Activated CD4-positive, alpha-beta T cell treated with anti-CD3 and anti-CD28 coated beads for 36 hours (primary cell): ENCODE measurements at regions of chr14 and their contacts with region 1.

Region 1: DNA sequence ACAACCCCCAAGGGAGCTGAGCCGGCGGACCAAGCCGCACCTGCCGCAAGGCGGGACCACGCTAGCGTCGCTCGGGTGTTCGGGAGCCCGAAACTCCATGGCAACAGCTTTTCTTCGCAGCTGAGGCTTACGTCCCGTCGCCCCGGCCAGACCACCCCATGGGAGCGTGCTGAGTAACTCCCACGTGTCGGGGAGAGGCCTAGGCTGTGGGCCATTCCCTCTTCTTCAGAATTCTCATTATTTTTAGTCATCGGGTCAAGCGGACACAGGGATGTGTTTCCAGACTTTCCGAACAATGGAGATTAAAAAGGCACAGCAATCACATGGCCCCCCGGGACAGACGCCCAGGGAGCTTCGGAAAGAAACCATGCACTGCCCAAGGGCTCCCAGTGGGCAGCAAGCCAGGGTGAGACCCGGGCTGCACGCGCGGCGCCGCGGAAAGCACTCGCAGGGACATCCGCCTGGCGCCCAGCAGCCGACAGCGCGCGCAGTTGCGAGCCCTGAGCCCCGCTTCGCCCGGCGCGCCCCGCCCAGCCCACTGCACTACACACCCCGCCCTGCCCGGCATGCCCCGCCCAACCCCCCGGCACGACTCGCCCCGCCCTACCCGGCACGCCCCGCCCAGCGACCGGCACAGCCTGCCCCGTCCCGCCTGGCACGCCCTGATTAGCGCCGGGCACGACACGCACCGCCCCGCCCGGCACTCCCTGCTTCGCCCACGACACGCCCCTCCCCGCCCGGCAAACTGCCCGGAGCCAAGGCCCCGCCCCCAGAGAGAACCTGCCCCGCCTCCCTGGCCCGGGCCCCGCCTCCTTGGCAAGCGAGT is 422 bp upstream of the AK7 start:
- DNase-seq: peak; percentile 100
- ATAC-seq: peak; percentile 97
- H3K4me3 Mint-ChIP-seq: peak overlapping the region; percentile 85
- H3K27ac Mint-ChIP-seq: peak overlapping the region; percentile 84
- H3K4me1 Mint-ChIP-seq: peaks cover 8% of the 10 kb centered on the region
- H3K27me3 Mint-ChIP-seq: peaks cover 8% of the 10 kb centered on the region

Region 2: DNA sequence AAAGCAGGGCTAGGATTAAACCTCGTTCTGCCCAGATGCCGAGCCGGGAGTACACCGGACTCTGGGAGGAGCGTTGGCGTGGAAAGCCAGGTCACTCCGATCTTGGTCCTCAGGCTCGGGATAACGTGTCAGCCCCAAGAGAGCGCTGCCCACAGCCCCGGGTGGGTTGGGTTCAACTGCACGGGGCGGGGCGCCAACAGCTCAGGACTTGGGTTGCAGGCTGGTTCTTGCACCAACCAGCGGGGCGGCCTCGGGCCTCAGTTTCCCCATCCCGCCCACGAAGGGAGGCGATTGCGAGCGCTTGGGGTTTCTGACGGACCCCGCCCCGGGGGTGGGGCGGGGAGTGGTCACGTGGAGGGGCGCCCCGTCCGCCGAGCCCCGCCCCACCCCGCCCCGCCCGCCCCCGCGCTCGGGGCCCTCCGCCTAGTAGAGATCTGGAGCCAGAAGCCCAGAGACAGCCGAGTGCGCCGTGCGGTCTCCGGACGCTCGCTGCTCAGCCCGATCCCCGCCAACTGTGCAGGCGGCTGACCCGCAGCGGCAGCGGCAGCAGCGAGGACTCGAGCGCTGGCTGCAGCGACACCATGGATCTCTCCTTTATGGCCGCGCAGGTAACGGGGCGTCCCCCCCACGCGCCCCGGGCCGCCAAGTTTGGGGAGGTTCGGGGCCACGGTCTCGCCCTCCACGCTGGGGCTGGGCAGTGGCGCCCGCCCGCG is 352.4 kb before region 1 on chr14 and contains the start of gene C14orf132:
- CTCF ChIA-PET with region 1: no interaction called
- POLR2A ChIA-PET with region 1: no interaction called
- intact Hi-C with region 1: loop called in 1 of 2 experiments (anchors 1 kb)
- DNase-seq: peak; percentile 86
- ATAC-seq: peak; percentile 90
- H3K4me3 Mint-ChIP-seq: peak within 1 kb of the TSS; percentile 76
- H3K27ac Mint-ChIP-seq: peak within 1 kb of the TSS; percentile 63
- H3K4me1 Mint-ChIP-seq: peaks cover 15% of the 10 kb centered on the region
- H3K27me3 Mint-ChIP-seq: peaks cover 20% of the 10 kb centered on the region
- total RNA-seq, gene C14orf132: 4.1 to 4.3 TPM

Region 3: DNA sequence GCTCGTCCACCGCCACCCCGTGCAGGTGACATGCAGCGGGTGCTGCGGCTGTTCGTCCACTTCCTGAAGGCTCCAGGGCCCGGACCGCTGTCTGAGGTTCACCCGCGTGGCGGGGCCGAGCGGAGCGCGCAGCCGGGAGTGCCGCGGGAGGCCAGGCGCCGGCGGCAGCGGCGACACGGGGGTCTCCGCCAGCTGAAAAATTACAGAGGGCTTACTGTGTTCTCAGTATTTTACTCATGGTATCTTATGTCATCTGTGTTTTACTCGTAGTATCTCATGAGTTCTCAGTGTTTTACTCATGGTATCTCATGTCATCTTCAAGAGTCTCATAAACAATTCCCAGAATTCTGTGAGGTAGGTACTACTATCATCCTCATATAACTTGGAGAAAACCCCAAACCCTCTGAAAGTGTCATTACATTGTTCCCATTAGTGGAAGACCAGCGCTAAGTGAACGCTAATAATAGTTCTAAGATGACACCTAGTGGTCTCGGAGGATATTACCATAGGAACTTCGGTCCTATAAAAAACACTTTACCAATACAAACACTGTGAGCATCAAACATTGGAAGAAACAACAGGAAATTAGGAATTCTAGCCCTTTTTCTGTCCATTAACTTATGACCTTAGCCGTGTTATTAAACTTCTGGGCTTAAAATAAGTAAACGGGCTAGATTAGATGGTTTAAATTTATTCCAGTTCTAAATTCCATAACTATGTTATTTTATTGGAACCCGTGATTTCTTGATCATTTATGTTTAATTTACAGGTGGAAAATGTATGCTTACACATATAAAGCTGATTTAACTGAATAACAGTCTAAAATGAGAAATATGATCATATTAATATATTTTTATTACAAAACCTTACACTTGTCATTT is 32.8 kb after region 1 on chr14:
- CTCF ChIA-PET with region 1: interaction called, 5 read pairs
- POLR2A ChIA-PET with region 1: no interaction called
- intact Hi-C with region 1: loop called in 1 of 2 experiments (anchors 2 kb)
- DNase-seq: peak; percentile 53
- ATAC-seq: peak; percentile 77
- H3K4me3 Mint-ChIP-seq: peak overlapping the region; percentile 54
- H3K27ac Mint-ChIP-seq: no peak overlapping the region
- H3K4me1 Mint-ChIP-seq: peaks cover 2% of the 10 kb centered on the region
- H3K27me3 Mint-ChIP-seq: peaks cover 3% of the 10 kb centered on the region

Region 4: GRCh38 chr14:96501742-96502617 is 110.5 kb after region 1 on chr14 and contains the start of gene PAPOLA:
- CTCF ChIA-PET with region 1: no interaction called
- POLR2A ChIA-PET with region 1: no interaction called
- intact Hi-C with region 1: loop called in 1 of 2 experiments (anchors 1 kb)
- DNase-seq: peak; percentile 96
- ATAC-seq: peak; percentile 95
- H3K4me3 Mint-ChIP-seq: peak within 1 kb of the TSS; percentile 99
- H3K27ac Mint-ChIP-seq: peak within 1 kb of the TSS; percentile 98
- H3K4me1 Mint-ChIP-seq: peaks cover 31% of the 10 kb centered on the region
- H3K27me3 Mint-ChIP-seq: peaks cover 6% of the 10 kb centered on the region
- total RNA-seq, gene PAPOLA: 190 to 205 TPM

Region 5: DNA sequence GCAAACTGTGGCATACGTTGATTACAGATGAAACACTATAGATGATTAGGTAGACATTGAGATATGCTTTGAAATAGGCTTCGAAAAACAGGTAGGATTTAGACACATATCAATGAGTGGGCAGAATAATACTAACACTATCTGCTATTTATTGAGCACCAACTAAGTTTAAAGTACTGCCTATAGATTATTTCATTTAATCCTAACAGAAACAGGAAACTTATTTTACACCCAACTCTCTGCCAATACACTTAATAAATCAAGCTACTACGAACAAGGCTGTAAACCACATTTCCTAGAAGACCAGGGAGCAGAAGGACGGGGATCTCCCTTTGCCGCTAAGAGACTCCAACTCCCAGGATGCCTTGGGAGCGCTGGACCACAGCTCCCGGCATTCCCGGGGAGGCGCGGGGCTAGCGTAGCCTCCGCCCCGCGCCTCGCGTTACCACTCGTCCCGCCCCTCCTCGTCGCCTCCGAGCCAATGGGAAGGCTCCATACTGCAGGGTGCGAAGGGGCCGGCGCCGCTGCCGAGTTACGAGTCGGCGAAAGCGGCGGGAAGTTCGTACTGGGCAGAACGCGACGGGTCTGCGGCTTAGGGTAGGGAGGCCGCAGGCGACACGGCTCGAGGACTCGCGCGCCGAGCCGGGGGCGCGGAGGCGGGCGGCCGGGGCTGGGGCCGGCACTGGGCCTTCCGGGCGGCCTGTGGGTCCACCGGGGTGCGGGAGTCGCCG is 405.5 kb after region 1 on chr14 and contains the start of gene VRK1:
- CTCF ChIA-PET with region 1: no interaction called
- POLR2A ChIA-PET with region 1: no interaction called
- intact Hi-C with region 1: loop called (anchors 1 kb)
- DNase-seq: peak; percentile 96
- ATAC-seq: peak; percentile 98
- H3K4me3 Mint-ChIP-seq: peak within 1 kb of the TSS; percentile 92
- H3K27ac Mint-ChIP-seq: peak within 1 kb of the TSS; percentile 88
- H3K4me1 Mint-ChIP-seq: peaks cover 24% of the 10 kb centered on the region
- H3K27me3 Mint-ChIP-seq: peaks cover 6% of the 10 kb centered on the region
- total RNA-seq, gene VRK1: 63.1 to 83.3 TPM